CD4-positive, alpha-beta T cell (primary cell): ENCODE measurements at regions of chr2 and their contacts with region 1.

Region 1: GRCh38 chr2:38750891-38751595 is at the start of gene SRSF7:
- DNase-seq: peak; percentile 96 to 100 (median 99)
- ATAC-seq: peak; percentile 77
- H3K4me3 ChIP-seq: peak within 1 kb of the TSS; percentile 92
- H3K4me3 Mint-ChIP-seq: peak within 1 kb of the TSS; percentile 99
- H3K27ac ChIP-seq: peak within 1 kb of the TSS; percentile 97
- H3K27ac Mint-ChIP-seq: peak within 1 kb of the TSS; percentile 94
- H3K4me1 ChIP-seq: peaks cover 42% of the 10 kb centered on the region
- H3K4me1 Mint-ChIP-seq: peaks cover 63% of the 10 kb centered on the region
- H3K27me3 ChIP-seq: no peaks in the 10 kb centered on the region
- H3K27me3 Mint-ChIP-seq: peaks cover 4% of the 10 kb centered on the region
- CTCF ChIP-seq: no peak
- total RNA-seq, gene SRSF7: 550 to 557 TPM

Region 2: DNA sequence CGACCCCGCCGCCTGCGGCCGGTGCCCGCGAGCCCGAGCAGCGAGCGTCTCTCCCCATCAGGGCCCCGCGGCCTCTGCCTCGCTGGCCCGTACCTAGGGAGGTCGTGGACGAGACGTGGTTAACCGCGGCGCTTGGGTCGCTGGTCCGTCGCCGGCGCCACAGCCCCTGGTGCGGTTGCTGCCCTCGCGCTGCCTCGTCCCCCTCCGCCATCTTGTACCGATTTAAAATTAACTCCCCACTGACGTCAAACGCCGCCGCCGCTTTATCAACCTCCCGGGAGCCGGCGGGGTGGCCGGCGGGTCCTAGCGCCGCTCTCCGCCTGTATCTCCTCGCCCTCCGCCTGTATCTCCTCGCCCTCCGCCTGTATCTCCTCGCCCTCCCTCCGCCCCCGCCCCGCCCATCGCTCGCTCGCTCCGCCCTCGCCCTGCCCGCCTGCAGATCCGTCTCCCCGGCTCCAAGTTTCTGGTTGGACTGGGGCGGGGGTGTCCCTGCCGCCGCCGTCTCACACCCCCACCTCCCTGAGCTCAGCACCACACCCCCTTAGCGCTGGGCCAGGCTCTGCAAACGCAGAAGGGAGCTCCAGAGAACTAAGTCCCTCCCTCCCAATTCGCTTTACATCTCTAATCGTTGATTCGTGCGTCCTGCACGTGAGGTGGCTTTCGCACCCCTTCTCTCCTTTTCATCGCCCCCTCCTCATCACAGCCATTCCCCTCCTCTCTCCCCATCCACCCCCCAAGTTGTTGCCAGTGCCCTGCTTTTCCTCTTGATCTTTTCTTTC is 373.8 kb before region 1 on chr2 and contains the start of gene ATL2:
- CTCF ChIA-PET with region 1: no interaction called
- POLR2A ChIA-PET with region 1: interaction called, 13 read pairs
- intact Hi-C with region 1: loop called in 1 of 2 experiments (anchors 2 kb)
- DNase-seq: peak; percentile 87 to 97 (median 91)
- ATAC-seq: peak; percentile 75
- H3K4me3 ChIP-seq: peak within 1 kb of the TSS; percentile 75
- H3K4me3 Mint-ChIP-seq: peak within 1 kb of the TSS; percentile 99
- H3K27ac ChIP-seq: peak within 1 kb of the TSS; percentile 59 to 75
- H3K27ac Mint-ChIP-seq: peak within 1 kb of the TSS; percentile 95
- H3K4me1 ChIP-seq: peaks cover 38% of the 10 kb centered on the region
- H3K4me1 Mint-ChIP-seq: peaks cover 83% of the 10 kb centered on the region
- H3K27me3 ChIP-seq: no peaks in the 10 kb centered on the region
- H3K27me3 Mint-ChIP-seq: no peaks in the 10 kb centered on the region
- CTCF ChIP-seq: no peak
- total RNA-seq, gene ATL2: 85.5 to 91.7 TPM

Region 3: DNA sequence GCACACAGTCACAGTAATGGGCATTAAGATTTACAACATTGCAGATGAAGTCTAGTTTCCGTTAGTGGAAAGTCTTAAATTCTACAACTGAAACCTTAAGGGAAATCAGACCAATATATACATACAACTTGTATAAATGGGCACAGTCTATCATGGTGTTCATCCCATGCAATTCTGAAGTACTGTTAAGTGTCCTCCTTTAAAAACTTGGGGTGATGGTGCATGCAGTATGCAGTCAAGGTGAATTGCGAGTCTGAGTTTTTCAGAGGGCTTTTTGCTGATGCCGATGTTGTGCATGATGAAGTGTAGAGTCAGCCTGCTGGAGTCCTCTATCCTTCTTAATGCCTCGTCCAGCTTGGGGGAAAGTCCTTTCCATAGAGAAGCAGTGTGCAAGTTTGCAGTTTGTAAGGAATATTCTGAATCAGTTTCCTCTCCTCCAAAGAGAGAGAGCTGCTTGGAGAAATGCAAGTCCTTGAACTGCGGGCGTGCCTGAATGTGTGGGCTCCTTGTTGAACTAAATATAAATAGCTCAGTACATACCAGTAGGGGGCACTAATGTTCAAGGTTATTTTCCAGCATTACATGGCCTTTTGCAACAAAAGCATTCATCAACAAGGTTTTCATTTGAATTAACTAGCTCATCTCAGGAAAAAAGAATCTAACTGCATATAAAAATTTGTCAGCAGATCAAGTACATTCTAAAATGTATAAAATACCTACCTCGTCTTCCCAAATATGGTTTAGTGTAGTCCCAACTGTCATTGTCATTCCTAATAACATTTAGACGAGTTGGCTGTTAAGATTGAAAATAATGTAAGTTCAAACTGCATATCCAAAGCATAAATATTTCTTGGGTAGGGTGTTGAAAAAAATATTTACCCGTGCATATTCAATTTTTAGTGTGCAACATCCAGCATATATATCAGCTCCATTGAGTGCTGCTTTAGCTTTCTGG is 169.6 kb before region 1 on chr2:
- CTCF ChIA-PET with region 1: interaction called, 8 read pairs
- POLR2A ChIA-PET with region 1: interaction called, 31 read pairs
- intact Hi-C with region 1: no loop called
- DNase-seq: peak in 9 of 14 experiments; percentile 9 to 87 (median 39)
- ATAC-seq: peak; percentile 87
- H3K4me3 ChIP-seq: no peak overlapping the region
- H3K4me3 Mint-ChIP-seq: no peak overlapping the region
- H3K27ac ChIP-seq: no peak overlapping the region
- H3K27ac Mint-ChIP-seq: peak overlapping the region; percentile 1
- H3K4me1 ChIP-seq: peaks cover 7% of the 10 kb centered on the region
- H3K4me1 Mint-ChIP-seq: peaks cover 22% of the 10 kb centered on the region
- H3K27me3 ChIP-seq: no peaks in the 10 kb centered on the region
- H3K27me3 Mint-ChIP-seq: no peaks in the 10 kb centered on the region
- CTCF ChIP-seq: peak; percentile 79

Region 4: DNA sequence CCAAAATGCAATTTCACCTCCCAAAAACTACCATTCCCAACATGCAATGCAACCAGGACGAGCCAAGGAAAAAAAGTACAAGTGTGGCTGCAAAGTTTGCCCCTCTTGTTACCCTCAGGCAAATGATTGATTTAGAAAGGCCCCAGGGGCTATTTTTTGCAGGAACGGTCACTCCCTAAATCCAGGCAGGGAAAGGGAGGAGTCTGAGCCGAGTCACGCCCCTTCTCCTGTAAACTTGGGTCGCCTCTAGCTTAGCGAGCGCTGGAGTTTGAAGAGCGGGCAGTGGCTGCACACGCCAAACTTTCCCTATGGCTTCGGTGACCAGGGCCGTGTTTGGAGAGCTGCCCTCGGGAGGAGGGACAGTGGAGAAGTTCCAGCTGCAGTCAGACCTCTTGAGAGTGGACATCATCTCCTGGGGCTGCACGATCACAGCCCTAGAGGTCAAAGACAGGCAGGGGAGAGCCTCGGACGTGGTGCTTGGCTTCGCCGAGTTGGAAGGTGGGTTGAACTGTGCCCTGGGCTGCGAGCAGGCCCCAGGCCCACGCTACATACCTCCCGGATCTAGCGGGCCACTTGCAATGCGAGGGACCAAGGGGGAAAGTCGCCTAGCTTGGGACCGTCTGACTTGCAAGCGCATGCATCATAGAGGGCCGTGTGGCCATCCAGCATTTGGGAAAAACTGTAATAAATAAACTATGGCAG is 85.0 kb before region 1 on chr2 and contains the start of gene GALM:
- CTCF ChIA-PET with region 1: no interaction called
- POLR2A ChIA-PET with region 1: interaction called, 42 read pairs
- intact Hi-C with region 1: no loop called
- DNase-seq: peak in 13 of 14 experiments; percentile 10 to 75 (median 39)
- ATAC-seq: peak; percentile 28
- H3K4me3 ChIP-seq: peak within 1 kb of the TSS; percentile 81
- H3K4me3 Mint-ChIP-seq: peak within 1 kb of the TSS; percentile 80
- H3K27ac ChIP-seq: peak within 1 kb of the TSS; percentile 58 to 77
- H3K27ac Mint-ChIP-seq: peak within 1 kb of the TSS; percentile 81
- H3K4me1 ChIP-seq: peaks cover 75% of the 10 kb centered on the region
- H3K4me1 Mint-ChIP-seq: peaks cover 65% of the 10 kb centered on the region
- H3K27me3 ChIP-seq: no peaks in the 10 kb centered on the region
- H3K27me3 Mint-ChIP-seq: no peaks in the 10 kb centered on the region
- CTCF ChIP-seq: no peak
- total RNA-seq, gene GALM: 5.9 to 7.0 TPM

Region 5: DNA sequence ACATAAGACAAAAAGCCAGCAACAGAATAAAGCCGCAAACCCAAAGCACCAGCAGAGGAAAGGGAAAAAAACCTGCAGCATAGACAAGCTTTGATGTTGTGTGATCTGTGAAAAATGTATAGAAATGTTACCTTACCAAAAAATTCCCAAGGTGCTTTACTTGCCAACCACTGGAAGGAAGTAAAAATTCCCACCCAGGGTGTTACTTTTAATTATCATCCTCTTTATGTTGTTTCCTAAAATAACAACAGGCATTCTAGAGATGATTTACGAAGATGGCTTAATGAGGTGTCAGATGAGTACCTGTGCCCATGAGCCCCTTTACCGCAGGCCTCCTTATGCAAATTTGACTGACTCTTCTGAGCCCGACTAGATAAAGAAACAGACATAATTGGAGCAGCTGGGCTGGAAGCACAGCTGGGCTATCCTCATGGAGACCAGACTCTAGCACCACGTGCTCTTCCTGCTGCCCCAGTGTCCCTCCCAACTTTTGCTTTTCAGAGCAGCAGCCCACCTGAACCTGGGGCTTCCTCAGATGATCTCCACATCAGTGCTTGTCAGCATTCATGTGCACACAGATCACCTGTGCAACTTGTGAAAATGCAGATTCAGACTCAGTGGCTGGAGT is 41.4 kb before region 1 on chr2:
- CTCF ChIA-PET with region 1: no interaction called
- POLR2A ChIA-PET with region 1: interaction called, 19 read pairs
- intact Hi-C with region 1: no loop called
- DNase-seq: peak in 5 of 14 experiments; percentile 53 to 88 (median 78)
- ATAC-seq: peak; percentile 77
- H3K4me3 ChIP-seq: peak overlapping the region; percentile 2
- H3K4me3 Mint-ChIP-seq: peak overlapping the region; percentile 82
- H3K27ac ChIP-seq: peak overlapping the region; percentile 50 to 55
- H3K27ac Mint-ChIP-seq: peak overlapping the region; percentile 93
- H3K4me1 ChIP-seq: peaks cover 67% of the 10 kb centered on the region
- H3K4me1 Mint-ChIP-seq: peaks cover 72% of the 10 kb centered on the region
- H3K27me3 ChIP-seq: no peaks in the 10 kb centered on the region
- H3K27me3 Mint-ChIP-seq: no peaks in the 10 kb centered on the region
- CTCF ChIP-seq: no peak

Region 6: DNA sequence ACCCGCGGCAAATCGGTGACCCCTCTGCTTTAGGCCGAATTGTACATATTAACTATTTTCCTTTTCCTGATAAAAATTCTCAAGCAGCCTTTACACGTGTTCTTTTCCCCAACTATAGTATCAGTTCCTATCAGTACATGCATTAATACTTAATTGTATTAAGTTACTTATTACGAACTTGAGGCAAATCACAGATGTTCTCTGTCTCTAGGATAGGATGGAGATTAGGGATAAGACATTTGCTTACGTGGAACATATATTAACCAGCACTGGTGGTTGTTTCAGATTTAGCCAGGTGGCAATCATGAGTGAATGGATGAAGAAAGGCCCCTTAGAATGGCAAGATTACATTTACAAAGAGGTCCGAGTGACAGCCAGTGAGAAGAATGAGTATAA is 27.6 kb after region 1 on chr2:
- CTCF ChIA-PET with region 1: interaction called, 5 read pairs
- POLR2A ChIA-PET with region 1: interaction called, 52 read pairs
- intact Hi-C with region 1: loop called (anchors 1 to 2 kb)
- DNase-seq: no peak
- ATAC-seq: no peak
- H3K4me3 ChIP-seq: peak overlapping the region; percentile 68
- H3K4me3 Mint-ChIP-seq: peak overlapping the region; percentile 90
- H3K27ac ChIP-seq: peak overlapping the region; percentile 71 to 73
- H3K27ac Mint-ChIP-seq: peak overlapping the region; percentile 89
- H3K4me1 ChIP-seq: peaks cover 17% of the 10 kb centered on the region
- H3K4me1 Mint-ChIP-seq: peaks cover 12% of the 10 kb centered on the region
- H3K27me3 ChIP-seq: no peaks in the 10 kb centered on the region
- H3K27me3 Mint-ChIP-seq: peaks cover 19% of the 10 kb centered on the region
- CTCF ChIP-seq: no peak